Naive thymus-derived CD4-positive, alpha-beta T cell (primary cell): ENCODE measurements at regions of chr5 and their contacts with region 1.

Region 1: DNA sequence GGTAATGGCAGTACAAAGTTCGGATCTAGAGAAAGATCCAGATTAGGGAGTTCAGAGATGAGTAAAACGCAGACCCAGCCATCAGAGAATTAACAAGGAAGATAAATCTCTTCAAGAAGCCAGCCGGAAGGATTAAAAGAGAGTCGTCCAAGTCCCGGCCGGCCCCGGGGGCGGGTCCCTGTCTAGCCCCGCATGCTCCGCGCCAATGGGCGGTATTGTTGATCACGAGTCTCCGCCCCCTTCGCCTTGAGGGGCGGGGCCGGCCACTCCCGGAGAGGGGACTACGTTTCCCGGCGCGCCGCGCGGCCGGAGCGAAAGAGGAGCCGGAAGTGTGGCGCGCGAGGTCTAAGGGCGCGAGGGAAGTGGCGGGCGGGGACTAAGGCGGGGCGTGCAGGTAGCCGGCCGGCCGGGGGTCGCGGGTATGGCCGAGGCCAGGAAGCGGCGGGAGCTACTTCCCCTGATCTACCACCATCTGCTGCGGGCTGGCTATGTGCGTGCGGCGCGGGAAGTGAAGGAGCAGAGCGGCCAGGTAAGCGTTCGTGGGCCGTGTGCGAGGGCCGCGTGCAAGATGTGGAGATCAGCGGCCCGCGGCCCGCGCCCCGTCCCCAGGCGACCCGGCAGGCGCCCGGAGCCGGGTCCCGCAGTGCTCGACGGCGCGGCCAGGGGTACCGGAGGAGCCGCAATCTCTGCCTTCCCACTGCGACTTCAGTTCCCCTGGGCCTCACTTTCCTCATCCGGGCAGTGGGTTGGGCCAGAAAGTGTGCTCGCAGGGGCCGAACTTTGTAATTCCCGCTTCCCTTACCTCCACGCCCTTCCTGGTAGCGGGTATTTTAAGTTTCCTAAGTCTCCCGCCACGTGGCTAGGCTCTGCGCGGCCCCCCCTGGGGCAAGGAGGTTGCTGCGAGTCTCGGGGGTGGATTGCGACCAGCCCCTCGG is at the start of gene TCOF1:
- DNase-seq: peak; percentile 94 to 98 (median 97)
- ATAC-seq: peak; percentile 100
- H3K4me3 ChIP-seq: peak within 1 kb of the TSS; percentile 62
- H3K4me3 Mint-ChIP-seq: peak within 1 kb of the TSS; percentile 85 to 95 (median 91)
- H3K27ac ChIP-seq: peak within 1 kb of the TSS; percentile 81
- H3K27ac Mint-ChIP-seq: peak within 1 kb of the TSS; percentile 87 to 97 (median 96)
- H3K4me1 ChIP-seq: peaks cover 23 to 24% of the 10 kb centered on the region in 2 donors
- H3K4me1 Mint-ChIP-seq: peaks cover 35 to 54% (median 48%) of the 10 kb centered on the region in 7 donors
- H3K27me3 ChIP-seq: no peaks in the 10 kb centered on the region
- H3K27me3 Mint-ChIP-seq: peaks cover 0 to 2% (median 0%) of the 10 kb centered on the region in 5 donors
- total RNA-seq, gene TCOF1: 45.9 to 60.0 (median 54.6) TPM

Region 2: GRCh38 chr5:148383564-148384379 is 1973.8 kb before region 1 on chr5 and contains the start of gene FBXO38:
- CTCF ChIA-PET with region 1: no interaction called
- POLR2A ChIA-PET with region 1: no interaction called
- intact Hi-C with region 1: loop called (anchors 1 to 5 kb)
- DNase-seq: peak; percentile 88 to 99 (median 98)
- ATAC-seq: peak; percentile 97
- H3K4me3 ChIP-seq: peak within 1 kb of the TSS; percentile 66
- H3K4me3 Mint-ChIP-seq: peak within 1 kb of the TSS; percentile 84 to 97 (median 88)
- H3K27ac ChIP-seq: peak within 1 kb of the TSS; percentile 91
- H3K27ac Mint-ChIP-seq: peak within 1 kb of the TSS; percentile 93 to 99 (median 98)
- H3K4me1 ChIP-seq: peaks cover 18 to 41% of the 10 kb centered on the region in 2 donors
- H3K4me1 Mint-ChIP-seq: peaks cover 43 to 78% (median 71%) of the 10 kb centered on the region in 7 donors
- H3K27me3 ChIP-seq: no peaks in the 10 kb centered on the region
- H3K27me3 Mint-ChIP-seq: no peaks in the 10 kb centered on the region
- total RNA-seq, gene FBXO38: 59.2 to 80.0 (median 65.6) TPM

Region 3: GRCh38 chr5:149938791-149939358 is 418.7 kb before region 1 on chr5:
- CTCF ChIA-PET with region 1: no interaction called
- POLR2A ChIA-PET with region 1: no interaction called
- intact Hi-C with region 1: no loop called
- DNase-seq: no peak
- ATAC-seq: peak; percentile 80
- H3K4me3 ChIP-seq: no peak overlapping the region
- H3K4me3 Mint-ChIP-seq: no peak overlapping the region
- H3K27ac ChIP-seq: no peak overlapping the region
- H3K27ac Mint-ChIP-seq: no peak overlapping the region
- H3K4me1 ChIP-seq: no peaks in the 10 kb centered on the region
- H3K4me1 Mint-ChIP-seq: peaks cover 0 to 3% (median 0%) of the 10 kb centered on the region in 7 donors
- H3K27me3 ChIP-seq: no peaks in the 10 kb centered on the region
- H3K27me3 Mint-ChIP-seq: peaks cover 0 to 15% (median 8%) of the 10 kb centered on the region in 5 donors

Region 4: DNA sequence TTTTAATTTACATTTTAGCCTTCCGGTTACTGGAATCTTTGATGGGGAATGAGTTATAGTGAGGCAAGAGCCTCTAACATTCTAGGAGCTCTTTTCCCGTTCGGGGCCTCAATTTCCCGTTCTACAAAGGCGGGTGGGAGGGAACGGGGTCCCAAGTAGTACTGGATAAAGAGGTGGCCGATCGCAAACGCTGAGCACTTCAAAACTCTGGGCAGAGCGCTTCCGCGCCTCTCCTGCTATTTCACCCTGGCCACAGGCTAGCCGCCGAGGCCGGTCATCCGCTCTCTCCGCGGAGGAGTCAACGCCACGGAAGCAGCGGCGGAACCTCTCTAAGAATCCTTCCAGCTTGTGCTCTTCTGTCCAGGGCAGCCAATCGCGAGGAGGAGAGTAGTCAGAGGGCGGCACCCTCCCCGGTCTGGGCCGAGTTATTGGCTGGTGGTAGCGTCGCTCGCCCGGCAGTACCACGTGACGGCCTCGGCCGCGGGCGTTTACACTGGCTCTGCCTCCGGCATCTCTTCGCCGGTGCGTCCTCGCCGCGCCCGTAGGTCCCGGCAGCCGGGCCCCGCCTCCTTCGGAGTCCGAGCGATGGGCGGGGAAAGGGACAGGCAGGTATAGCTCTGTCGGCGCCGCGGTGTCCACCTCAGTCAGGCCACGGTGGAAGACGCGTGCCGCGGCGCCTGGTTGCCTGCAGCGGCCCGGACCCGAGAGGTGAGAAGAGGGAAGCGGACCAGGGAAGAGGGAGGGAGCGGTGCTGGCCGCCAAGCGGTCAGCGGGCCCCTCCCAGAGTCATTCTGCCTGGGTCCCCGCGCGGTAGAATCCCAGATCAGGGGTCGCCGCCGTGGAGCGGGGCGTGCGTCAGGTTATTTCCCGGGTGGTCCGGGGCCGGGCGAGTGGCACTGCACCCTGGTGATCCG is 397.1 kb before region 1 on chr5 and contains the start of gene SLC26A2:
- CTCF ChIA-PET with region 1: no interaction called
- POLR2A ChIA-PET with region 1: no interaction called
- intact Hi-C with region 1: loop called in 1 of 2 experiments (anchors 5 kb)
- DNase-seq: peak; percentile 78 to 92 (median 91)
- ATAC-seq: peak; percentile 99
- H3K4me3 ChIP-seq: peak within 1 kb of the TSS; percentile 98
- H3K4me3 Mint-ChIP-seq: peak within 1 kb of the TSS; percentile 90 to 100 (median 96)
- H3K27ac ChIP-seq: peak within 1 kb of the TSS; percentile 77
- H3K27ac Mint-ChIP-seq: peak within 1 kb of the TSS; percentile 94 to 98 (median 97)
- H3K4me1 ChIP-seq: peaks cover 16 to 28% of the 10 kb centered on the region in 2 donors
- H3K4me1 Mint-ChIP-seq: peaks cover 14 to 43% (median 37%) of the 10 kb centered on the region in 7 donors
- H3K27me3 ChIP-seq: no peaks in the 10 kb centered on the region
- H3K27me3 Mint-ChIP-seq: no peaks in the 10 kb centered on the region
- total RNA-seq, gene SLC26A2: 5.2 to 16.5 (median 9.6) TPM

Region 5: DNA sequence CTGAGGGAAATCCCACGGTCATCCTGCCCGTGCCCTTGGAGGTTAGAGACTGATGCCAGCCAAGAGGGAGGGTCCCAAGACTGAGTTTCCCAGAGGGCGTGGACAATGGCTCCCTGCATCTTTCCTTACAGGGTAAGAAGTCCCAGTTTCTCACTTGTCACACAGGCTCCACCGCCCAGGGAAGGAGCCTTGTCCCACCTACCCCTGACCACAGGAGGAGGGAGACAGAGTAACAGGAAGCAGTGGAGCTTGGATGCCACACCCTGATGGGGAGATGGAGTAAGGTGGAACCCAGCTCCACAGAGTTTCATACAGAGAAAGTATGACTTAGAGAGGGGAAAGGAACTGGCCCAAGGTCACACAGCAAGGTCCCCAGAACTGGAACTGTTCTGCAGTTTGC is 64.5 kb after region 1 on chr5:
- CTCF ChIA-PET with region 1: no interaction called
- POLR2A ChIA-PET with region 1: no interaction called
- intact Hi-C with region 1: no loop called
- DNase-seq: no peak
- ATAC-seq: no peak
- H3K4me3 ChIP-seq: no peak overlapping the region
- H3K4me3 Mint-ChIP-seq: no peak overlapping the region
- H3K27ac ChIP-seq: no peak overlapping the region
- H3K27ac Mint-ChIP-seq: peak overlapping the region in 1 of 9 donors; percentile 51
- H3K4me1 ChIP-seq: no peaks in the 10 kb centered on the region
- H3K4me1 Mint-ChIP-seq: peaks cover 0 to 9% (median 0%) of the 10 kb centered on the region in 7 donors
- H3K27me3 ChIP-seq: no peaks in the 10 kb centered on the region
- H3K27me3 Mint-ChIP-seq: peaks cover 0 to 9% (median 0%) of the 10 kb centered on the region in 5 donors

Region 6: GRCh38 chr5:150436141-150436680 is 78.6 kb after region 1 on chr5:
- CTCF ChIA-PET with region 1: no interaction called
- POLR2A ChIA-PET with region 1: no interaction called
- intact Hi-C with region 1: loop called in 1 of 2 experiments (anchors 1 kb)
- DNase-seq: peak; percentile 74 to 89 (median 86)
- ATAC-seq: peak; percentile 99
- H3K4me3 ChIP-seq: no peak overlapping the region
- H3K4me3 Mint-ChIP-seq: peak overlapping the region in 6 of 10 donors; percentile 29 to 61 (median 56)
- H3K27ac ChIP-seq: peak overlapping the region; percentile 12
- H3K27ac Mint-ChIP-seq: peak overlapping the region; percentile 53 to 94 (median 72)
- H3K4me1 ChIP-seq: peaks cover 0 to 7% of the 10 kb centered on the region in 2 donors
- H3K4me1 Mint-ChIP-seq: peaks cover 6 to 11% (median 7%) of the 10 kb centered on the region in 7 donors
- H3K27me3 ChIP-seq: no peaks in the 10 kb centered on the region
- H3K27me3 Mint-ChIP-seq: no peaks in the 10 kb centered on the region

Region 7: DNA sequence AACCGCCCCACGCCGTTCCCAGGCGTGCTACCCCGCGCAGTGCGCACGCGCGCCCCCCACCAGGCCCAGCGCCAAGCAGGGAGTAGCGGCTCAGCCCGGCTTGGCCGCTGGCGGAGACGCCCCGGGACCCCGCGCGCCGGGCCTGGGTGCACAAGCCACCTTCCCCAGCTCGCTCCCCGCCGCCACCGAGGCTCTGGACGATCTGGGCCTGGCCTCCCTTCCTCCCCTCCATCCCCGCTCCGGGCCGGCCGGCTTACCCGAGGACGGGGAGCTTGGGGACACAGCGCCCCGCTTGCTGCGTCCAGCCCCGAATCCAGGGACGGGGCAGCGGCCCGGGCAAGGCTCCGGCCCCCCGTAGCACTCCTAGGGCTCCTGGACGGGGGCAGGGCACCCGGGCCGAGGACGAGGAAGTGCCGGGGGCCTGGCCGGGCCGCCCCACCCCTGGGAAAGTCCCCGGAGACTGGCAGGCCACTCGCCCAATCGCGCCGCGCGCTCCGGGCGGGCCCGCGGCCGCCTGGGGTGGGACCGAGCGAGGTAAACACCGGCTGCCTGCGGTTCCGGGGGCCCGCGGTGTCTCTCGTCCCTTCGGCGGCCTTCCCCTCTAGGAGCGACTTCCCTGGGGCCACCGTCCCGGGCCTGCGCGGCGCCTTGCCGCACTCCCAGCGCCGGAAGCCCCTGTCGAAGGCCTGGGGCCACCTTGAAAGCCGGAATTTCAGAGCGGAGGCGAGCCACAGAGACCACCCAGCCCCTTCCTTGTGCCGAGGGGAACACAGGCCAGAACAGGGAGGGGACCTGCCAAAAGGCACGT is 723.2 kb after region 1 on chr5 and contains the start of gene TNIP1:
- CTCF ChIA-PET with region 1: no interaction called
- POLR2A ChIA-PET with region 1: no interaction called
- intact Hi-C with region 1: loop called (anchors 1 to 5 kb)
- DNase-seq: peak; percentile 86 to 99 (median 90)
- ATAC-seq: peak; percentile 94
- H3K4me3 ChIP-seq: peak within 1 kb of the TSS; percentile 86
- H3K4me3 Mint-ChIP-seq: peak within 1 kb of the TSS; percentile 85 to 95 (median 90)
- H3K27ac ChIP-seq: peak within 1 kb of the TSS; percentile 96
- H3K27ac Mint-ChIP-seq: peak within 1 kb of the TSS; percentile 86 to 95 (median 91)
- H3K4me1 ChIP-seq: peaks cover 37 to 69% of the 10 kb centered on the region in 2 donors
- H3K4me1 Mint-ChIP-seq: peaks cover 53 to 84% (median 73%) of the 10 kb centered on the region in 7 donors
- H3K27me3 ChIP-seq: no peaks in the 10 kb centered on the region
- H3K27me3 Mint-ChIP-seq: no peaks in the 10 kb centered on the region
- total RNA-seq, gene TNIP1: 124 to 234 (median 131) TPM

Region 8: DNA sequence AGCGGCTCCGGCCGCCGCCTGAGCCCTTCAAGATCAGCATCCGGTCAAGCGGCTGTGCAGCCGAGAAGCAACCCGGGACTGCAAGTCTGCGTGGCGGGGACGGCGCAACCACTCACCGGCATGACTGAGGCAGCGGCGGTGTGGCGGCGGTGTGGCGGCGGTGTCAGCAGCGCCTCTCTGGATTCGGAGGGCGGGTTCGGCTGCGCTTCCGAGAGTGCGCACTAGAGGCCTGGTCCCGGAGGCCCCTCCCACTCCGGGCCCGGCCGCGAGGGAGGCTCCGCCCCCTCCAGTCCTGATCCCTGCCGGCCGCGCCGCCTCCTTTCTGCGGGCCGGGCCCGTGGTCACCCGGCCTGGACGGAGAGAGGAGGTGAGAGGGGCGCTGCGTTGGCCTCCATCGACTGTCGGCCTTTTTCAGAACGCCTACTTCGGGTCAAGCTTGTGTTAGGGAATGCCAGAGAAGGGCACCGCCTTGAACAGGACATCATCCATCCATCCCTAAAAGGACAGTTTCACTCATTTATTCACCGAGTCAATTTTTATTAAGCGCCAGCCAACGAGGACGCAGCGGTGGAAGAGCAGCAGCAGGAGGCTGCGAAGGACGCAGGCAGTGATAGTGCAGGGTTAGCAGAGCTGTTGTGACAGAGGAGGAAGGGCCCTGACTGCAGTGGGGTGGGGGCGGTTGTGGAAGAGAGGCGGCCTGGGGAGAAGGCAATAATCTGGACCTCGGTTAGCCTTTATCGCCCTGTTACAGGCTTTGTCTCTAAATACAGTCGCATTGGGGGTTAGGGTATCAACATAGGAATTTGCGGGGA is 1401.0 kb after region 1 on chr5 and contains the start of gene ATOX1:
- CTCF ChIA-PET with region 1: no interaction called
- POLR2A ChIA-PET with region 1: no interaction called
- intact Hi-C with region 1: loop called in 1 of 2 experiments (anchors 5 kb)
- DNase-seq: peak; percentile 85 to 93 (median 89)
- ATAC-seq: peak; percentile 100
- H3K4me3 ChIP-seq: peak within 1 kb of the TSS; percentile 94
- H3K4me3 Mint-ChIP-seq: peak within 1 kb of the TSS; percentile 88 to 99 (median 94)
- H3K27ac ChIP-seq: peak within 1 kb of the TSS; percentile 94
- H3K27ac Mint-ChIP-seq: peak within 1 kb of the TSS; percentile 88 to 98 (median 94)
- H3K4me1 ChIP-seq: peaks cover 14 to 20% of the 10 kb centered on the region in 2 donors
- H3K4me1 Mint-ChIP-seq: peaks cover 16 to 50% (median 39%) of the 10 kb centered on the region in 7 donors
- H3K27me3 ChIP-seq: no peaks in the 10 kb centered on the region
- H3K27me3 Mint-ChIP-seq: peaks cover 0 to 3% (median 0%) of the 10 kb centered on the region in 5 donors
- total RNA-seq, gene ATOX1: 14.8 to 58.2 (median 29.6) TPM